ENCODE measurements at regions of chr15 and their contacts with region 1.

Region 1: GRCh38 chr15:59492389-59493377 is 54.7 kb downstream of the FAM81A start:
- DNase-seq: peak; percentile 50 to 86 (median 64)
- H3K4me3 ChIP-seq: peak overlapping the region in 6 of 59 donors; percentile 4 to 37 (median 19)
- H3K27ac ChIP-seq: peak overlapping the region in 45 of 59 donors; percentile 4 to 87 (median 57)
- H3K27me3 ChIP-seq: no peaks in the 10 kb centered on the region
- CTCF ChIP-seq: peak; percentile 61 to 99 (median 89)

Region 2: GRCh38 chr15:58987489-58988005 is 505.1 kb before region 1 on chr15 and contains the start of gene RNF111:
- intact Hi-C with region 1: loop called (anchors 5 to 10 kb)
- DNase-seq: peak; percentile 69 to 91 (median 88)
- H3K4me3 ChIP-seq: peak within 1 kb of the TSS; percentile 53 to 99 (median 91)
- H3K27ac ChIP-seq: peak within 1 kb of the TSS; percentile 6 to 97 (median 91)
- H3K27me3 ChIP-seq: no peaks in the 10 kb centered on the region
- CTCF ChIP-seq: peak in 31 of 56 donors; percentile 4 to 49 (median 27)
- total RNA-seq, gene RNF111: 46.8 to 85.1 (median 63.3) TPM

Region 3: GRCh38 chr15:59174835-59175831 is 317.6 kb before region 1 on chr15:
- intact Hi-C with region 1: loop called (anchors 2 to 10 kb)
- DNase-seq: peak in 9 of 10 donors; percentile 51 to 84 (median 71)
- H3K4me3 ChIP-seq: peak overlapping the region in 2 of 59 donors; percentile 7 to 10
- H3K27ac ChIP-seq: peak overlapping the region in 58 of 59 donors; percentile 24 to 92 (median 83)
- H3K27me3 ChIP-seq: no peaks in the 10 kb centered on the region
- CTCF ChIP-seq: peak; percentile 28 to 85 (median 74)

Region 4: GRCh38 chr15:59237119-59237855 is 255.4 kb before region 1 on chr15:
- intact Hi-C with region 1: no loop called
- DNase-seq: no peak
- H3K4me3 ChIP-seq: no peak overlapping the region
- H3K27ac ChIP-seq: peak overlapping the region in 10 of 59 donors; percentile 2 to 40 (median 18)
- H3K27me3 ChIP-seq: no peaks in the 10 kb centered on the region
- CTCF ChIP-seq: no peak

Region 5: DNA sequence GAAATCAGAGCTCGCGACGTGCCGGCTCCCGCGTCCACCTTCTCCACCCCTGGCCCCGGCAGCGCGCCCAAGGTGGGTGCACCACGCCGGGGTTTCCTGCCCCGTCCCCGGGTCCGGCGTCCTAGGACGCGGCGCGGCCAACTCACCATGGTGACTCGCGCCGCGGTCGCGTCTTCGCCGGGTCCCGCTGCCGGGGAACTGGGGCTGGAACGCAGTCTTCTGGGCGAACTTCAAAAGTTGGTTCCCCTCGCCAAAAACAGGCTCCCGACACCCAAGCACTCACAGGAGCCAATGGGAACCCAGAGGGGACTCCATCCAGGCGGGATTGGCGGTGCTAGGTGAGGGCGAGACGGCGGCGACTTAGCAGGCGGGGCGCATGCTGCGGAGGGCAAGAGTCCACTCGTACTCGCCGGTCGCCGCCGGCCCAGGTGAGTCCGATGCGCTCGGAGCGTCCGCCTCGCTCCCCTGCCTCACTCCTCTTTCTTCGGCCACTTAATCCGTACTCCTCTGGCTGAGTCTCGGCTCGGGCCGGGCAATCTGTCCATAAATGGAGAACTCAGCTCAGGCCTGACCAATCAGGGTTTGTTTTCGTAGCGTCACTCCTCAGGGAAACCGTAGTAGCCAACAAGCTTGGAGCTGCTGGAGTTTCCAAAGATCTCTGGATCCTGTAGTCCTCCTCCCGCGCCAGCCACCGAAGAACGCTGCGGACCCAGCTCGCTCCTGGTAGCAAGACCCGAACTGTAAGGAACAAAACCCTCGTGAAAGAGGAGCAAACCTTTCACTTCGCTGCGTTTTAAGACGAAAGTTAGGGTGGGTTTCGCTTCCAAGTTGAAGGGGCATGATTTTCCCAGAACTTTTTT is 120.1 kb before region 1 on chr15 and contains the start of gene MYO1E:
- intact Hi-C with region 1: loop called (anchors 5 kb)
- DNase-seq: peak; percentile 64 to 98 (median 94)
- H3K4me3 ChIP-seq: peak within 1 kb of the TSS; percentile 52 to 96 (median 86)
- H3K27ac ChIP-seq: peak within 1 kb of the TSS; percentile 16 to 98 (median 91)
- H3K27me3 ChIP-seq: no peaks in the 10 kb centered on the region
- CTCF ChIP-seq: peak in 22 of 56 donors; percentile 4 to 55 (median 28)
- total RNA-seq, gene MYO1E: 28.1 to 166 (median 63.9) TPM

Region 6: DNA sequence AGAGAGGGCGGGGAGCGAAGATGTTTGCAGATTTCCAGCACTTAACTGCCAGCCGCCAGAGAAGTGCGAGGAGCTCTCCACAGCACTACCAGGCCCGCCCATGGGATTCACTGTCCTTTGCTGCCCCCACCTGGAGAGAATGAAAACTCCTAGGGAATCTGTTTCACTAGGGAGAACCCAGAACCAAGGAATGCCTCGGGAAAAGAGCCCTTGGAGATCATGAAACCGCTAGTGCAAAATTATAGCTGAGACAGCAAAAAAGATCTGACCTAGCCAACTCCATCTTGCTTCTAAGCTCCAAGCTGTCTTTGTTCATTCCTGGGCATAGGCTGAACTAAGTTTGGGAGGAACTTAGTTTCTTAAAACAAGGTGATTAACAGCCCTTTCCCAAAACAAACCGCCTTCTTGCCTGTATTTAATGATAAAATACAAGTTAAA is 36.3 kb after region 1 on chr15:
- intact Hi-C with region 1: loop called in 1 of 2 experiments (anchors 2 kb)
- DNase-seq: peak; percentile 44 to 90 (median 82)
- H3K4me3 ChIP-seq: no peak overlapping the region
- H3K27ac ChIP-seq: no peak overlapping the region
- H3K27me3 ChIP-seq: no peaks in the 10 kb centered on the region
- CTCF ChIP-seq: peak; percentile 55 to 98 (median 87)

Measured in dorsolateral prefrontal cortex (tissue), 120 donors.